ENCODE measurements at regions of chr5 and their contacts with region 1.

Region 1: DNA sequence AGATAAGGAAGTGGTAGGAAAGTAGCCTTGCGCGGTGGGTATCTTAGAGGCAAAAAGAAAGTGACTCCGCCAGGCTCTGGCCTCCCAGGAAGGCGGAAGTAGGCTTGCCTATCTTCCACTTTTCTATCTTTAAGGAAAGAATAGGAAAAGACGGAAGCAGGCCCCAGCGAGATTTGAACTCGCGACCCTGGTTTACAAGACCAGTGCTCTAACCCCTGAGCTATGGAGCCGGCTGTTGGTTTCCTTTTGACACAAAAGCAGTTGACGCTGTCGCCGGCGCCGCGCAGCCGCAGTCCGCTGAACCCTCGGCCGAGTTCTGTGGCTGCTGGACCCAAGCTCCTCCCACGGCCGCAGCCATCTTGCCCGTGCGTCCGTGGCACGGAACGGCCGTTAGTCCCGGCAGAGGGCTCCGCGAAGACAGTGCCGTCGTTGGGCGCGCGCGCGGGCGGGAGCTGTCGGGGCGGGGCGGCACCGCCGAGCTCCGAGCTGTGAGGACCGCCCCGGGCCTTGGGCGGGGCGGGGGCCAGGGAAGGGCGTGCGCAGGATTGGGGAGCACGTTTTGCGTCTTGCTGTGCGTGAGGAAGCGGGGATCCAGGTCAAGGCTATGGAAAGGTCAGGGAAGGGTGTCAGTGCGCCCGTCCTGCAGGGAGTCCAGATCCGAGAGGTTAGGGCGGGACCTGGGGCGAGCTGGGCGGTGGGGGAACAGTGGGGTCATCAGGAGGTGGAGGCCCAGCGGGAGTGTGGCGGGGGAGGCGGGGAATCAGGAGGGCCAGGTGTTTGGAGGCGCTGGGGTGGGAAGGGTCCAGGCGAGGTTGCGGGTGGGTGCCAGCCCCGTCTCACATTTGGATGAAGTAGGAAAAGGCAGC is 13.2 kb downstream of the TRIM7 start:
- DNase-seq: peak; percentile 97 to 99
- ATAC-seq: peak; percentile 64 to 81 (median 74)
- H3K4me3 ChIP-seq: peak overlapping the region; percentile 91
- H3K4me3 Mint-ChIP-seq: peak overlapping the region; percentile 100
- H3K27ac ChIP-seq: peak overlapping the region; percentile 79
- H3K27ac Mint-ChIP-seq: peak overlapping the region; percentile 99 to 100
- H3K4me1 ChIP-seq: peaks cover 34% of the 10 kb centered on the region
- H3K4me1 Mint-ChIP-seq: peaks cover 51 to 58% of the 10 kb centered on the region in 2 donors
- H3K27me3 ChIP-seq: no peaks in the 10 kb centered on the region
- H3K27me3 Mint-ChIP-seq: peaks cover 6 to 11% of the 10 kb centered on the region in 2 donors
- CTCF ChIP-seq: no peak

Region 2: GRCh38 chr5:179212870-179213269 is 1978.9 kb before region 1 on chr5:
- intact Hi-C with region 1: no loop called
- DNase-seq: no peak
- ATAC-seq: no peak
- H3K4me3 ChIP-seq: no peak overlapping the region
- H3K4me3 Mint-ChIP-seq: no peak overlapping the region
- H3K27ac ChIP-seq: no peak overlapping the region
- H3K27ac Mint-ChIP-seq: no peak overlapping the region
- H3K4me1 ChIP-seq: no peaks in the 10 kb centered on the region
- H3K4me1 Mint-ChIP-seq: no peaks in the 10 kb centered on the region
- H3K27me3 ChIP-seq: no peaks in the 10 kb centered on the region
- H3K27me3 Mint-ChIP-seq: no peaks in the 10 kb centered on the region
- CTCF ChIP-seq: no peak

Region 3: GRCh38 chr5:181207214-181208107 is 15.7 kb after region 1 on chr5:
- intact Hi-C with region 1: loop called (anchors 1 kb)
- DNase-seq: peak; percentile 66 to 90
- ATAC-seq: peak; percentile 66 to 74 (median 72)
- H3K4me3 ChIP-seq: peak overlapping the region; percentile 31
- H3K4me3 Mint-ChIP-seq: peak overlapping the region; percentile 99
- H3K27ac ChIP-seq: peak overlapping the region; percentile 58
- H3K27ac Mint-ChIP-seq: peak overlapping the region; percentile 91 to 99
- H3K4me1 ChIP-seq: peaks cover 38% of the 10 kb centered on the region
- H3K4me1 Mint-ChIP-seq: peaks cover 33 to 48% of the 10 kb centered on the region in 2 donors
- H3K27me3 ChIP-seq: peaks cover 10% of the 10 kb centered on the region
- H3K27me3 Mint-ChIP-seq: peaks cover 24 to 27% of the 10 kb centered on the region in 2 donors
- CTCF ChIP-seq: no peak

Region 4: DNA sequence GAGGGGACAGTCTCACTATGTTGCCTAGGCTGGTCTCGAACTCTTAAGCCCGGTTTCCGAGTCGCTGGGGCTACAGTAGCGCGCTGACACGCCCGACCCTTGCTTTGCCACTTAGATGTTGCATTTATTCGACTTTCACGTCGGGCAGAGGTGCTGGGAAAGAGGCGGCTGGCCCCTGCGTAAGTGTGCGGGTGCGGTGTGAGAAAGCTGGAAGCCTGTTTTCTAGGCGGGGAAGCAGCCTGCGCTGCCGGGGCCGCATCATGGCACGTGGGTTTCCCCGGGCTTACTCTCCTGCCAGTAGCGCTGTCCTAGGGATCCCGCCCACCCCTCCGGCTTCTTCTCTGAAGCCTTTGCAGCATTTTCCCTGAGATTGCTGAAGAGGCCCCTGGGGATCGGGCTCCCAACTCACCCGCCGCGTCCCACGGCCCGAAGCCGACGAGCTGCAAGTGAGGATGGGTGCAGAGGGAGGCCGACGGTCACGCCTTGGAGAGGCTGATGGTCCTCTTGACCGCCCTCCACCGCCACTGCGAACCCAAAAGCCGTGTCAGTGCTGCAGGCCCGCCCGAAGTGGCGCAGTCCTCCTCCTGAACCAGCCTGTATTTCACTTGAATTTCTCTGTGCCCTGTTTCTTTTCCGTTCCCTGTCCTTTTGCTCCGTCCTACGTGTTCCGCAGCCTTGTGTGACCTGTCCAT is 25.5 kb after region 1 on chr5:
- intact Hi-C with region 1: loop called (anchors 1 kb)
- DNase-seq: peak; percentile 67 to 84
- ATAC-seq: peak; percentile 46 to 73 (median 51)
- H3K4me3 ChIP-seq: peak overlapping the region; percentile 61
- H3K4me3 Mint-ChIP-seq: peak overlapping the region; percentile 94
- H3K27ac ChIP-seq: peak overlapping the region; percentile 71
- H3K27ac Mint-ChIP-seq: peak overlapping the region; percentile 93 to 99
- H3K4me1 ChIP-seq: peaks cover 53% of the 10 kb centered on the region
- H3K4me1 Mint-ChIP-seq: peaks cover 45 to 52% of the 10 kb centered on the region in 2 donors
- H3K27me3 ChIP-seq: no peaks in the 10 kb centered on the region
- H3K27me3 Mint-ChIP-seq: peaks cover 1 to 9% of the 10 kb centered on the region in 2 donors
- CTCF ChIP-seq: no peak

Region 5: DNA sequence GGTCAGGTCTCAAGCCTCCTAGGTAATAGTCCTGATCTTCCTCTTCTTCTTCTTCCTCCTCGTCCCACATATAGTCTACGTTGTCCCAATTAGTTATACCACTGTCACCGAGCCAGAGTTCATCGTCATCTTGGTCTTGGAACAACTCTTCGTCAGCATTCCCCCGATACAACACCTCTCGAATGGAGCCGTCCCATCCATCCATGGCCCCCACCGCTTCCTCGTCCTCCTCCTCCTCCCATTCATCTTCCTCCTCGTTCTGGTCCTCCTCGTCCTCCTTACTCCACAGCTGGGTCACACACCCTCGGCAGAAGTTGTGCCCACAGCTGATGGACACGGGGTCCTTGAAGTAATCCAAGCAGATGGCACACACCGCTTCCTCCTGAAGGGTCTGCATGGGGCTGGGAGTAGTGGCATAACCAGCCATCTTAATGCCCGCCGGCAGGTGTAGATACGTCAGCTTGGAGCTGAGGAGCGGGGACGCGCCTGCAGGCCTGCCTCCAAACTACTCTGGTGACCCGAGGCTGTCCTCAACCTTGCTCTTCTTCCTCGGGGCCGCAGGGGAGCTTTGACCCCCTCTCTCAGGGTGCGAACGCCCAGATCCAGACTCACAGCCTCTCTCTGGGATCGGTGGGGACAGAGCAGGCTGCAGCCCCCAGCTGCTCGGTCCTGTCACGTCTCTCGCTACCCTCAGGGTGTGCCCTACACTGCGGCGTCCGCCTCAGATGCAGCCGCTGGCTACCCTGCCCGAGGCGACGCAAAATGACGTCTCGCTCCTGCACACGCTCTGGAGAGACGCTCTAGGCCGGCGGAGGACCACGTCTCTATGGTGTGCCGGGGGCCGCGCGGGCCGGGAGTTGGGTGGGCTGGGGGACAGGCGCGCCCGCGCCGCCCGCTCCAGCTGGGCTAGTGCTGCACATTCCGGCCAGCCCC is 68.9 kb after region 1 on chr5 and contains the start of gene TRIM52:
- intact Hi-C with region 1: loop called (anchors 2 kb)
- DNase-seq: peak; percentile 87 to 96
- ATAC-seq: peak; percentile 77 to 95 (median 83)
- H3K4me3 ChIP-seq: peak within 1 kb of the TSS; percentile 92
- H3K4me3 Mint-ChIP-seq: peak within 1 kb of the TSS; percentile 99
- H3K27ac ChIP-seq: peak within 1 kb of the TSS; percentile 98
- H3K27ac Mint-ChIP-seq: peak within 1 kb of the TSS; percentile 98 to 99
- H3K4me1 ChIP-seq: peaks cover 41% of the 10 kb centered on the region
- H3K4me1 Mint-ChIP-seq: peaks cover 46 to 57% of the 10 kb centered on the region in 2 donors
- H3K27me3 ChIP-seq: no peaks in the 10 kb centered on the region
- H3K27me3 Mint-ChIP-seq: no peaks in the 10 kb centered on the region
- CTCF ChIP-seq: no peak
- total RNA-seq, gene TRIM52: 43.4 to 60.0 (median 44.4) TPM

Measured in natural killer cell (primary cell).